Activated CD4-positive, alpha-beta memory T cell treated with anti-CD3 and anti-CD28 coated beads for 36 hours (primary cell): ENCODE measurements at regions of chr21 and their contacts with region 1.

Region 1: GRCh38 chr21:31326522-31327242 is 17.4 kb downstream of the TIAM1 start:
- DNase-seq: peak; percentile 81
- H3K4me3 Mint-ChIP-seq: peak overlapping the region; percentile 47
- H3K27ac Mint-ChIP-seq: peak overlapping the region; percentile 88
- H3K4me1 Mint-ChIP-seq: peaks cover 30% of the 10 kb centered on the region
- H3K27me3 Mint-ChIP-seq: no peaks in the 10 kb centered on the region

Region 2: GRCh38 chr21:30847627-30848500 is 478.8 kb before region 1 on chr21:
- CTCF ChIA-PET with region 1: no interaction called
- POLR2A ChIA-PET with region 1: no interaction called
- intact Hi-C with region 1: no loop called
- DNase-seq: no peak
- H3K4me3 Mint-ChIP-seq: no peak overlapping the region
- H3K27ac Mint-ChIP-seq: no peak overlapping the region
- H3K4me1 Mint-ChIP-seq: no peaks in the 10 kb centered on the region
- H3K27me3 Mint-ChIP-seq: peaks cover 7% of the 10 kb centered on the region

Region 3: GRCh38 chr21:31293986-31294385 is 32.7 kb before region 1 on chr21:
- CTCF ChIA-PET with region 1: no interaction called
- POLR2A ChIA-PET with region 1: interaction called, 5 read pairs
- intact Hi-C with region 1: loop called (anchors 1 kb)
- DNase-seq: peak; percentile 84
- H3K4me3 Mint-ChIP-seq: no peak overlapping the region
- H3K27ac Mint-ChIP-seq: peak overlapping the region; percentile 70
- H3K4me1 Mint-ChIP-seq: peaks cover 41% of the 10 kb centered on the region
- H3K27me3 Mint-ChIP-seq: no peaks in the 10 kb centered on the region

Region 4: GRCh38 chr21:31386006-31386405 is 59.3 kb after region 1 on chr21:
- CTCF ChIA-PET with region 1: no interaction called
- POLR2A ChIA-PET with region 1: no interaction called
- intact Hi-C with region 1: no loop called
- DNase-seq: no peak
- H3K4me3 Mint-ChIP-seq: no peak overlapping the region
- H3K27ac Mint-ChIP-seq: no peak overlapping the region
- H3K4me1 Mint-ChIP-seq: no peaks in the 10 kb centered on the region
- H3K27me3 Mint-ChIP-seq: no peaks in the 10 kb centered on the region